HCT116 (cell line): ENCODE measurements at regions of chr5 and their contacts with region 1.

Region 1: DNA sequence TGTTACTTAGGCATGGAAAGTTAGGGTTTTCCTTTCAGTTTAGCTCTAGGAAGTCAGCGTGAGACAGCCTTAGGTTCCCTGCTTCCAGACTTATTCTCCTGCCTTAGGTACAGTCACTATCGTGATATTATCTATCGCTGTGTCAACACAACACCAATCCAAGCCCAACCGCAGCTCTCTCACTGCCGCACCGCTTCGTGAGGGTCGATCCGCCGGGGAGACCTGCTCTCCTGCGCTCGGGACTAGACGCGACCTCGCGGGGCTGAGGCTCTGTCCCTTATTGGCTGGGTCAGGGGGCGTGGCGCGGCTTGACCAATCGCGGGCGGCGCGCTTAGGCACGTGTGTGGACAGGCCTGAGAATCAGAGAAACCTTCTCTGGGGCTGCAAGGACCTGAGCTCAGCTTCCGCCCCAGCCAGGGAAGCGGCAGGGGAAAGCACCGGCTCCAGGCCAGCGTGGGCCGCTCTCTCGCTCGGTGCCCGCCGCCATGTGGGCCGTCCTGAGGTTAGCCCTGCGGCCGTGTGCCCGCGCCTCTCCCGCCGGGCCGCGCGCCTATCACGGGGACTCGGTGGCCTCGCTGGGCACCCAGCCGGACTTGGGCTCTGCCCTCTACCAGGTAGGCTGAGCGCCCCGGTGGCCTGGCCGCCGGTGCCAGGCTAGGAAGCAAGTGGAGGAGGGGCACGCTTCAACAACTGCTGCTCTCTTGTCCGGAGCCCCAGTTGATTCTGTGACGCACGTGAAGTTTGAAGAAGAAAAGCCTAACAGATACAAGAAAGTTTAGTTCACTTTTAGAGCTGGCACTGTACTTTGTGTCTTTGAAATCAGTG is at the start of gene MCCC2:
- DNase-seq: peak; percentile 83
- ATAC-seq: peak; percentile 99
- H3K4me3 ChIP-seq: peak within 1 kb of the TSS; percentile 74 to 75
- H3K27ac ChIP-seq: peak within 1 kb of the TSS; percentile 55
- H3K4me1 ChIP-seq: peaks cover 10 to 23% of the 10 kb centered on the region in 2 experiments
- H3K27me3 ChIP-seq: no peaks in the 10 kb centered on the region
- CTCF ChIP-seq: no peak
- POLR2A ChIP-seq: peak; percentile 68
- RAD21 ChIP-seq: no peak
- total RNA-seq, gene MCCC2: 47.2 TPM

Region 2: DNA sequence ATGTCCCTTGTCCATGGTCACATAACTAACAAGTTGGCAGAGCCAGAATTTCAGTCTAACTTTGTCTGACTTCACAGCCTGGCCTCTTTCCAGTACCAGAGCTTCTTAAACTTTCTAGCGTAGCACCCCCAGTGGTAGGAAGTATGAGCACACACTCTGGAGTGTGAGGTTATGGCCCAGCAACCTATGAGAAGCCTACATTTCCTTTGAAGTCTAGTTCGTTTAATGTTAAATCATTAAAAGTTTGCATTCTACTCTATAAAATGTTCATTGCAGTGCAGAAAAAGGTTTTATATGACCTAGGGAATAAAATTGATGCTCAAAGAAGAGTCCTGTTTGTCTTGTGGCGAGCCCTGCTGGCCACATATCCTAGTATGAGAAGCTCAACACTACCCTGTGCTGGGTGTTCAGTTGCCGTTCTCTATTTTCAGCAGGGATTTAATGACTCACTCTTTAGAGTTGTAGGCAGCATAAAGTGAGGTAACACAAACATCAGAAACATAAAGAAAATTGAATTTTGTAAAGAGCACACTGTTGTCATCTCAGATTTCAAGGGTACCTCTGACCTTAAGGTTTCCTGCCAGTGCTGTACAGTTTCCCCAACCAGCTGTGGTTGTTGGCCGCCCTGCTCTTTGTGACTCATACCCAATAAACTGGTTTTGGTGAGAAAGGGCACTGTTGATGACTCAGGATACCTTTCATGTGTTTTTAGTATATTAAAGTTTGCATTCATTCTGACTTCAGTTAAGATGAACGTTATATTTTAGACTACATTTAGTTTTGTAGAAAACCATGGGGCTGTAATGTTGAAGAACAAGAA is 14.3 kb after region 1 on chr5:
- CTCF ChIA-PET with region 1: interaction called, 20 read pairs
- POLR2A ChIA-PET with region 1: interaction called, 3 read pairs
- RAD21 ChIA-PET with region 1: no interaction called
- intact Hi-C with region 1: no loop called
- DNase-seq: peak; percentile 95
- ATAC-seq: peak; percentile 94
- H3K4me3 ChIP-seq: peak overlapping the region in 1 of 2 experiments; percentile 41; a peak in 3 of 4 replicates
- H3K27ac ChIP-seq: peak overlapping the region; percentile 76
- H3K4me1 ChIP-seq: peaks cover 32 to 38% of the 10 kb centered on the region in 2 experiments
- H3K27me3 ChIP-seq: no peaks in the 10 kb centered on the region
- CTCF ChIP-seq: peak; percentile 76 to 93 (median 86)
- POLR2A ChIP-seq: no peak
- RAD21 ChIP-seq: peak; percentile 48